ENCODE measurements at regions of chr10 and their contacts with region 1.

Region 1: DNA sequence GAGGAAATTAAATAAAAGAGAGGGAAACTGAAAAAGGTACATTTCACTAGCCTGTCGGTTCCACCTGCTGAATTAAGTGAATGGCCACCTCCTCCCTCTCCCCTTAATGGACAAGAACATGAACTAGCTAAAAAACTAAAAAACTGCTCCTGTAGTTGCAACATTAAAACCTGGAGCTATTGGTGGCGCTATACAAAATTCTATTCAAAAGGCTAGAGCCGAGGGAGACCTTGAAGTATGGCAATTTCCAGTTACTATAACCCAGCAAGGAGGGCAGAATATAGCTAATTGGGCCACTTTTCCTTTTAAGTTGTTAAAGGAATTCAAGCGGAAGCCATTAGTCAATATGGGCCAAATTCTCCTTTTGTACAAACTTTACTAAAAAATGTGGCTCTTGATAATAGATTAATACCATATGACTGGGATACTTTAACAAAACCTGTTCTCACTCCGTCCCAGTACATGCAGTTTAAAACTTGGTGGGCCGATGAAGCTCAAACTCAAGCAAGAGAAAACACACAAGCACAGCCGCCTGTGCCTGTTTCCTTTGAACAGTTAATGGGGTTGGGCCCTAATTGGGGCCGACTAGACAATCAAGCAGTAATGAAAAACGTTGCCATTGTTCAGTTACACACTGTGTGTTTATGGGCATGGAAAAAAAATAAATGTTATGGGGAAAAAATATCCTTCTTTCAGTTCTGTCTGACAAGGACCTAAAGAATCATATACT is 6.5 kb upstream of the CHST3 start:
- DNase-seq: no peak
- H3K4me3 ChIP-seq: no peak overlapping the region
- H3K27ac ChIP-seq: no peak overlapping the region
- H3K4me1 ChIP-seq: peaks cover 0 to 6% of the 10 kb centered on the region in 2 donors
- H3K27me3 ChIP-seq: no peaks in the 10 kb centered on the region
- CTCF ChIP-seq: no peak
- POLR2A ChIP-seq: no peak

Region 2: GRCh38 chr10:71899665-71900412 is 57.9 kb before region 1 on chr10:
- intact Hi-C with region 1: loop called (anchors 5 kb)
- DNase-seq: peak; percentile 96
- H3K4me3 ChIP-seq: no peak overlapping the region
- H3K27ac ChIP-seq: peak overlapping the region; percentile 86 to 98 (median 94)
- H3K4me1 ChIP-seq: peaks cover 9 to 20% of the 10 kb centered on the region in 2 donors
- H3K27me3 ChIP-seq: no peaks in the 10 kb centered on the region
- CTCF ChIP-seq: no peak
- POLR2A ChIP-seq: peak in 1 of 2 donors; percentile 9

Region 3: GRCh38 chr10:71999360-72000072 is 41.8 kb after region 1 on chr10:
- intact Hi-C with region 1: no loop called
- DNase-seq: peak; percentile 46
- H3K4me3 ChIP-seq: no peak overlapping the region
- H3K27ac ChIP-seq: peak overlapping the region; percentile 48 to 65 (median 60)
- H3K4me1 ChIP-seq: peaks cover 28 to 36% of the 10 kb centered on the region in 2 donors
- H3K27me3 ChIP-seq: no peaks in the 10 kb centered on the region
- CTCF ChIP-seq: no peak
- POLR2A ChIP-seq: no peak

Region 4: DNA sequence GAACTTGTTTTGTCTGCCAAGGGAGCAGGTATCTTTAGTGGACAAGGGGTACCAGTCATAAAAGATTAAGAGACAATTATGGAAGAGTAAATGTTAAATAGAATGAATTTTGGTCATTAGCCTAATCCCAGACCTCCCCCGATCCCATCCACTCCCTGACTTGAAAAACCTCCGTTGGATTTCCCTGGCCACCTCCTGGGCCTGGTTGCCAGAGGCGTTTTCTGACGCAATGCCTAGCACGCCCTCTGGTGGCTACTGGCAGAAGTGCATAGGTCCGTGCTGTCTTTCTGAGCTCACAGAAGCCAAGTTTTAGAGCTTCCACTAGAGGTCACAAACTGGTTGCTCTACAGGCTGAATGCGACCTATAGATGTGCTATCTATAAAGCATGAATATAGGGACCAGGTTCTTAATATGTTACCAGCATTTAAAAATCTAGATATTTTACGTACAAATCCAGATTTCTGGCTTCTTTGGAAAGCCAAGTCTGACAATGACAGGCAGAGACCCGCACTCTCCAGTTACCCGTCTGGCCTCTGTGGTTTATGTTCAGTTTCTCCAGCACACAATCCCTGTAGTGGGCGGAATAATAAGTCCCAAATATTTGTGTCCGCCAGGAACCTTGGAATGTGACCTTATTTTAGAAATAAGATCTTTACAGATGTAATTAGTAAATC is 90.9 kb after region 1 on chr10:
- intact Hi-C with region 1: loop called (anchors 2 kb)
- DNase-seq: peak; percentile 93 to 94
- H3K4me3 ChIP-seq: no peak overlapping the region
- H3K27ac ChIP-seq: no peak overlapping the region
- H3K4me1 ChIP-seq: peaks cover 0 to 10% of the 10 kb centered on the region in 2 donors
- H3K27me3 ChIP-seq: no peaks in the 10 kb centered on the region
- CTCF ChIP-seq: peak; percentile 95 to 100 (median 99)
- POLR2A ChIP-seq: no peak

Region 5: DNA sequence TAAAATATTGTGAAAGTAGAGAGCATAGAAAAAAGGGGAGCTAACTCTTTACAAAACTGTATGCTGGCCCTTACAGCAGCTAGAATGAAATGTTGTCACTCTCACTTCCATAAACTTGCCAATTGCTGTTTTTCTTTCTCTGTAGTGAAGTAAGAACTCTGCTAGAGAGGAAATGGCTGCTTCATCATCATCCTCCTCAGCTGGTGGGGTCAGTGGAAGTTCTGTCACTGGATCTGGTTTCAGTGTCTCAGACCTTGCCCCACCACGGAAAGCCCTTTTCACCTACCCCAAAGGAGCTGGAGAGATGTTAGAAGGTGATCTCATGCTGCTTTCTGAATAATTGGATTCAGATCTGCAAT is 266.0 kb after region 1 on chr10:
- intact Hi-C with region 1: loop called (anchors 10 kb)
- DNase-seq: no peak
- H3K4me3 ChIP-seq: no peak overlapping the region
- H3K27ac ChIP-seq: peak overlapping the region; percentile 57 to 83 (median 72)
- H3K4me1 ChIP-seq: peaks cover 8 to 21% of the 10 kb centered on the region in 2 donors
- H3K27me3 ChIP-seq: no peaks in the 10 kb centered on the region
- CTCF ChIP-seq: no peak
- POLR2A ChIP-seq: no peak